HEK293 (cell line): ENCODE measurements at regions of chr19 and their contacts with region 1.

Region 1: GRCh38 chr19:47436712-47437401 is 17.5 kb upstream of the MEIS3 start:
- H3K4me3 ChIP-seq: no peak overlapping the region
- H3K27ac ChIP-seq: no peak overlapping the region
- H3K4me1 ChIP-seq: no peaks in the 10 kb centered on the region
- CTCF ChIP-seq: peak; percentile 85

Region 2: DNA sequence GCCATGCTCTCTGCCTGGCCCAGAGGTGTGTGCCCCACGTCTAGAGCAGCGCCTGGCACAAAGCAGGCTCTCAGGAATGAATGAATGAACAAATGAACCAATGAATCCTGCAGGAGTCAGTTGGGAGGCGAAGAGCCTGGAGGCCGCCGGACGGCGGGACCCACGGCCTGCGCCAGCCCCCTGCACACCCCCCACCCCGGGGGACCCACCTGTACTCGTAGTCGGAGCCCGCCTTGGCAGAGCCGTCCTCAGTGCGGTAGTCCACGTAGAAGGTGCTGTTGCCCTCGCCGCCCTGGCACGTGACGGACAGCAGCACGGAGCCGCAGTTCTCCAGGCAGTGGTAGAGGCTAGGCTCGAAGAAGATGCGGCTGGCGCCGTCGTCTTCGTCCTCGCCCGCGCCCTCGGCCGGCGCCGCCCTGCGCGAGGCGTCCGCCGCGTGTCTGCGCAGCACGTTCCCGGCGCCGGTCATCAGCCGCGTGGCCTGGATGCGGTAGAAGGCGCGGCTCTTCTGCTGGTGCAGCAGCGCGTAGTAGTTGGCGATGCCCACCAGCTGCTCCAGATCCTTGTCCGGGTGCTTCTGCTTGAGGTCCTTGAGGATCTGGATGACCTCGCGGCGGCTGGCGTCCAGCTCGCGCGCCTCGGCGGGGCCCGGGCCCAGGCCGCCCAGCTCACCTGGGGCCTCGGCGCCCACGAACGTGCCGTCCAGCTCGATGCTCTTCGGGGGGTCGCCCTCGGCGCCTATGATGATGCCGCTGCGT is 20.0 kb after region 1 on chr19:
- CTCF ChIA-PET with region 1: interaction called, 16 read pairs
- POLR2A ChIA-PET with region 1: interaction called, 4 read pairs
- H3K4me3 ChIP-seq: no peak overlapping the region
- H3K27ac ChIP-seq: no peak overlapping the region
- H3K4me1 ChIP-seq: no peaks in the 10 kb centered on the region
- CTCF ChIP-seq: no peak

Region 3: GRCh38 chr19:47483800-47484690 is 47.2 kb after region 1 on chr19 and contains the start of gene KPTN:
- CTCF ChIA-PET with region 1: interaction called, 56 read pairs
- POLR2A ChIA-PET with region 1: interaction called, 13 read pairs
- H3K4me3 ChIP-seq: peak within 1 kb of the TSS; percentile 85
- H3K27ac ChIP-seq: peak within 1 kb of the TSS; percentile 79
- H3K4me1 ChIP-seq: no peaks in the 10 kb centered on the region
- CTCF ChIP-seq: peak; percentile 99

Region 4: DNA sequence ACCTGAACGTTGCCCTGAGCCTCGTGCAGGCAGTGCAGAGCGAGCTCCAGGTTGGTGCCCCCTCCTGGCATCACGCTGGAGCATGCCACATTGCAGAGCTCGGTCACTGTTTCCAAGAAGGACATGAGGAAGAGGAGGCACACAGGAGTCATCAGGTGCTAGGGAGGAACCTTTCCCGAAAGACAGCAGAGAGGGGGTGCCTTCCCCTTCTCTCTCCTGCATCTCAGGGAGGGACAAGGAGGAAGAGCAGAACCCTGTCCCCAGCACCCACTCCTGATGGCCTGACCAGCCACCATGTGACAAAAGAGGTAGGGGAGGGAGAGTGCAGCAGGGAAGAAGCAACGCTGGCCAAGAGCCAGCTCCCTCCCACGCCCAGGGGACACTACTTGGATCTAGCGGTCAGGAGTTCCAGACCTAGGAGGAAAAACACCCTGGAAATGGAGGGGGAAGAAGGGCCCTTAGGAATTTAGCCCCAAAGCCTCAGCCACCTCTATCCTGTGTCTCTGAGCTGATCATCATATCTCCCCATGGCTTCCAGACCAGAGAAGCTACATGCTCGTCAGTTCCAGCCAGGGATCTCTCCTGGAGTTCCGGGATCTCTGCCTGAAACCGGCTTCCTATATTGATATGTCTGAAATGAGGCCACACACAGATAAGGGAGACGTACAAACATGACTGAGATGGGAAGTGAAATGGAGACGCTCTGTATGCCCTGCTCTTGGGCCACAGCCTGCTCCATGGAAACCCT is 95.0 kb after region 1 on chr19:
- CTCF ChIA-PET with region 1: interaction called, 12 read pairs
- POLR2A ChIA-PET with region 1: no interaction called
- H3K4me3 ChIP-seq: no peak overlapping the region
- H3K27ac ChIP-seq: no peak overlapping the region
- H3K4me1 ChIP-seq: no peaks in the 10 kb centered on the region
- CTCF ChIP-seq: peak; percentile 56

Region 5: GRCh38 chr19:47697863-47698609 is 261.2 kb after region 1 on chr19:
- CTCF ChIA-PET with region 1: interaction called, 102 read pairs
- POLR2A ChIA-PET with region 1: no interaction called
- H3K4me3 ChIP-seq: no peak overlapping the region
- H3K27ac ChIP-seq: 0 out of 2 replicates have a peak overlapping the region, but pooled peaks have one; percentile 52
- H3K4me1 ChIP-seq: no peaks in the 10 kb centered on the region
- CTCF ChIP-seq: peak; percentile 97

Region 6: DNA sequence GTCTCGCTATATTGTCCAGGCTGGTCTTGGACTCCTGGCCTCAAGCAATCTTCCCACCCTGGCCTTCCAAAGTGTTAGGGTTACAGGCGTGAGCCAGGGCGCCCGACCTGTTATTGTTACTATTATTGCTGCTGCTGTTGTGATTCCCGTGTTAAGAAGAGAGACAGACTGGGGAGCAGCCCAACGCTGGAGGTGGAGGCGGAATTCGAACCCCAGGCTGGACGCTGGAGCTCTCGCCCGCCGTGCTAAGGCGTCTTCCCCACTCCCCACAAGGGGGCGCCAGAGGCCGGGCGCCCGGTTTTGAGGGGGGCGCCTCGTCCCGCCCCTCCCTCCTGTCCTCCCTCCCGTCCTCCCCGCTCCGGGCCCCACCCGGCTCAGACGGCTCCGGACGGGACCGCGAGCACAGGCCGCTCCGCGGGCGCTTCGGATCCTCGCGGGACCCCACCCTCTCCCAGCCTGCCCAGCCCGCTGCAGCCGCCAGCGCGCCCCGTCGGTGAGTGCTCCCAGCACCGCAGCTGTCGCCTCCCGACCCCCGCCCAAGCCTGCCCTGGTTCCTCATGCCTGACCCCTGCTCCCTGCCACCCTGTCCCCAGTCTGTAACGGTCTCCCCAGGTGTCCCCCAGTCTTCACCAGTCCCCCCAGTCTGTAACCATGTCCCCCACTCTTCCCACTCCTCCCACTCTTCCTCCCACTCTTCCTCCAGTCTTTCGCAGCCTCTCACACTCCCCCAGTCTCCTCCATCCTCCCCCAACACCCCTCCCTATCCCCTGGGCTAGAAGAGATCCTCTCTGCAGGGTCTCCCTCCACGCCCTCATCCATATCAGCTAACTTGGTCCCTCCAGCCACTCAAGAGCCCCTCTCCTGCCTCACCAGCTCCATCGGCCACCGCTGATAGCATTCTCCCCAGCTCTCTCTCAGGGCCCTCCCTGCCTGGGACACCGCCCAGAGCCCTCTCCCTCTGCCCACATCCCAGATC is 276.5 kb after region 1 on chr19 and contains the start of gene EHD2:
- CTCF ChIA-PET with region 1: interaction called, 121 read pairs
- POLR2A ChIA-PET with region 1: no interaction called
- H3K4me3 ChIP-seq: peak within 1 kb of the TSS; percentile 13
- H3K27ac ChIP-seq: no peak within 1 kb of the TSS
- H3K4me1 ChIP-seq: no peaks in the 10 kb centered on the region
- CTCF ChIP-seq: no peak